ENCODE measurements at regions of chr1 and their contacts with region 1.

Region 1: DNA sequence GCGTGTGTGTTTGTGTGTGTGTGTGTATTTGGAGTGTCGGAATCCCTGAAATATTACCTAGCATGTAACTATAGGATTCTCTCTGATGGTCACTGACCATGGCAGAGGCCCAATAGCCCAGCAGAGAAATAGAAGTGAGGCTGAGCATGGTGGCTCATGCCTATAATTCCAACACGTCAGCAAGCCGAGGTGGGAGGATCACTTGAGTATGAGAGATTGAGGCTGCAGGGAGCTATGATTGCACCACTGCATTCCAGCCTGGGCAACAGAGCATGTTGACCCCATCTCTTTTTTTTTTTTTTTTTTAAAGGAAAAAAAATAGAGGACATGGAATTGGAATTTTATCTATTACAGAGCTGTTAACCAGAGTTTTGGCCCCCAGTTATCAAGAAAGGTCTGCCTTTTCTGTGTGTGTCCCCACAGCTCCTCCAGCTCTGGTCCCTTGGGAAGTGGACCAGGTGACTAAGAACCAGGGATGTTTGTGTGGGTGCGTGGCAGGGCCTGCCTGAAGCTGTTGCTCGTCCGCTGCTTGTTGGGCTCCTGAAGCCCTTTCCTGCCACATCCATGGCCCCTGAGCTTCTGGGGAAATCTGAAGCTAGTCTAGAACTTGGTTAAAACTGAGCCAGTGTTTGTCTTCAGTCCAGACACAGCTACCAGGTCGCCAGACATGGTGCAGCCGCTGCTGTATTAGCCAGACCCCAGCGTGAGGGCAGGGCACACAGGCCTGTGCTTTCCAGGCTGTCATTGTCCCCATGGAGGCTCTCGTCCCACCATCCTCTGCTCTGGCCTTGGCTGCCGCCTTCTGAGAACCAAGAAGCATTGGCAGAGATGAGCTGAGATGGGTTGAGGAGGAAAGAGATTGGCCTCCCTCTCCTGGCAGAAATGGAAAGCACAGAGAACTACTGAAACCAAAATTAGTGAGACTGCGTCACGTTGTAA is 25.5 kb downstream of the CAPN9 start:
- DNase-seq: peak; percentile 59
- ATAC-seq: peak; percentile 74
- H3K4me3 ChIP-seq: no peak overlapping the region
- H3K27ac ChIP-seq: peak overlapping the region; percentile 63; the same call in 1 of the 2 replicates
- H3K4me1 ChIP-seq: peaks cover 13% of the 10 kb centered on the region
- H3K27me3 ChIP-seq: peaks cover 2% of the 10 kb centered on the region; the same call in 1 of the 2 replicates
- CTCF ChIP-seq: peak; percentile 63
- POLR2A ChIP-seq: no peak
- RAD21 ChIP-seq: peak; percentile 65

Region 2: GRCh38 chr1:230426246-230427093 is 346.3 kb before region 1 on chr1 and contains the start of gene PGBD5:
- CTCF ChIA-PET with region 1: no interaction called
- POLR2A ChIA-PET with region 1: no interaction called
- dilution Hi-C with region 1: no loop called
- in situ Hi-C with region 1: no loop called
- intact Hi-C with region 1: loop called (anchors 10 kb)
- DNase-seq: peak; percentile 46
- ATAC-seq: peak; percentile 99
- H3K4me3 ChIP-seq: peak within 1 kb of the TSS; percentile 39
- H3K27ac ChIP-seq: no peak within 1 kb of the TSS
- H3K4me1 ChIP-seq: no peaks in the 10 kb centered on the region; the same call in 1 of the 2 replicates
- H3K27me3 ChIP-seq: peaks cover 28% of the 10 kb centered on the region
- CTCF ChIP-seq: no peak
- POLR2A ChIP-seq: no peak
- RAD21 ChIP-seq: no peak
- total RNA-seq, gene PGBD5: 0.18 and 0.28 TPM in 2 replicates

Region 3: GRCh38 chr1:230632273-230632873 is 140.4 kb before region 1 on chr1:
- CTCF ChIA-PET with region 1: interaction called, 4 read pairs
- POLR2A ChIA-PET with region 1: no interaction called
- dilution Hi-C with region 1: no loop called
- in situ Hi-C with region 1: no loop called
- intact Hi-C with region 1: loop called (anchors 1 kb)
- DNase-seq: peak; percentile 24
- ATAC-seq: peak; percentile 80
- H3K4me3 ChIP-seq: no peak overlapping the region
- H3K27ac ChIP-seq: no peak overlapping the region
- H3K4me1 ChIP-seq: no peaks in the 10 kb centered on the region
- H3K27me3 ChIP-seq: peaks cover 6% of the 10 kb centered on the region
- CTCF ChIP-seq: peak; percentile 51
- POLR2A ChIP-seq: no peak
- RAD21 ChIP-seq: peak; percentile 61

Region 4: GRCh38 chr1:230681599-230681998 is 91.1 kb before region 1 on chr1:
- CTCF ChIA-PET with region 1: interaction called, 3 read pairs
- POLR2A ChIA-PET with region 1: no interaction called
- dilution Hi-C with region 1: no loop called
- in situ Hi-C with region 1: no loop called
- intact Hi-C with region 1: loop called (anchors 2 kb)
- DNase-seq: peak; percentile 85
- ATAC-seq: peak; percentile 71
- H3K4me3 ChIP-seq: no peak overlapping the region
- H3K27ac ChIP-seq: no peak overlapping the region
- H3K4me1 ChIP-seq: peaks cover 10% of the 10 kb centered on the region
- H3K27me3 ChIP-seq: no peaks in the 10 kb centered on the region
- CTCF ChIP-seq: no peak
- POLR2A ChIP-seq: no peak
- RAD21 ChIP-seq: no peak

Region 5: GRCh38 chr1:231011963-231012362 is 239.2 kb after region 1 on chr1:
- CTCF ChIA-PET with region 1: no interaction called
- POLR2A ChIA-PET with region 1: no interaction called
- dilution Hi-C with region 1: no loop called
- in situ Hi-C with region 1: no loop called
- intact Hi-C with region 1: no loop called
- DNase-seq: no peak
- ATAC-seq: no peak
- H3K4me3 ChIP-seq: no peak overlapping the region
- H3K27ac ChIP-seq: no peak overlapping the region
- H3K4me1 ChIP-seq: no peaks in the 10 kb centered on the region
- H3K27me3 ChIP-seq: no peaks in the 10 kb centered on the region
- CTCF ChIP-seq: no peak
- POLR2A ChIP-seq: no peak
- RAD21 ChIP-seq: no peak

Measured in IMR-90 (cell line).